Prostate gland (tissue), 2 donors: ENCODE measurements at regions of chr11 and their contacts with region 1.

Region 1: GRCh38 chr11:2196970-2197770 is 25.6 kb upstream of the TH start:
- DNase-seq: peak; percentile 77
- H3K4me3 ChIP-seq: no peak overlapping the region
- H3K27ac ChIP-seq: no peak overlapping the region
- H3K4me1 ChIP-seq: no peaks in the 10 kb centered on the region
- H3K27me3 ChIP-seq: no peaks in the 10 kb centered on the region
- CTCF ChIP-seq: peak; percentile 80 to 98 (median 92)
- POLR2A ChIP-seq: no peak

Region 2: GRCh38 chr11:2256923-2257716 is 60.0 kb after region 1 on chr11:
- intact Hi-C with region 1: no loop called
- DNase-seq: peak; percentile 85
- H3K4me3 ChIP-seq: no peak overlapping the region
- H3K27ac ChIP-seq: peak overlapping the region; percentile 84 to 93
- H3K4me1 ChIP-seq: peaks cover 18% of the 10 kb centered on the region
- H3K27me3 ChIP-seq: no peaks in the 10 kb centered on the region
- CTCF ChIP-seq: peak in 1 of 4 experiments; percentile 8
- POLR2A ChIP-seq: no peak

Region 3: DNA sequence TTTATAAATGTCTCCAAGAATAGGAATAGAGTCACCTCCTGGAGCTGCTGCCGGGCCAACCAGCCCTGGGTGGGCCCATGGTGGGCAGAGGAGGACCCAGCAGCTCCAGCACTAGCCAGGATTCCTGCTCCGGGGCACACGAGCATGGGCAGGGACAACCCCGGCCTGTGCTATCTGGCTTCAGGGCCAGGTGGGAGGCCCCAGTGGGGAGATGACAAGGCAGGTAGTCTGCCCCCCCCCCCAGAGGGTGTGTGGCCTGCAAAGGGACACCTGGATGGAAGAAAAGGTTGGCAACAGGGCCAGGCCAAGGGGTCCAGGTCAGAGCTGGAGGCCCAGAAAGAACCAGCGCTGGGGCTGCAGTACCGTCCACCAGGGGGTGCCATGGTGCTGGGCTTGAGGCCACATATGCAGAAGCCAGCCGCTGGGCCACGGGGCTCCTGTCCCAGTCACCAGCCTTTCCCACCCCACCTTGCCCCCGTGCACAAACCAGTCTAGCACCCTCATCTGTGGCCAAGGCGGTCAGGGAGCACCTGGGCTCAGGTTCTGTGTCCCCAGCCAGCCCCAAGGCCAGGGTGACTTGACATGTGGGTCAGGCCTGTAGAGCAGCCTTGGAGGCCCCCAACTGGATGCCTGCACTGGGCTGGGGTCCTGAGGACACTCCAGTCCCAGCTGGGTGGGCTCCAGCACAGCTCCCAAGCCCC is 108.1 kb after region 1 on chr11:
- intact Hi-C with region 1: loop called (anchors 5 kb)
- DNase-seq: peak; percentile 74
- H3K4me3 ChIP-seq: no peak overlapping the region
- H3K27ac ChIP-seq: peak overlapping the region in 1 of 2 donors; percentile 19
- H3K4me1 ChIP-seq: no peaks in the 10 kb centered on the region
- H3K27me3 ChIP-seq: no peaks in the 10 kb centered on the region
- CTCF ChIP-seq: peak; percentile 86 to 98 (median 92)
- POLR2A ChIP-seq: no peak

Region 4: GRCh38 chr11:2420502-2421225 is 223.5 kb after region 1 on chr11:
- intact Hi-C with region 1: loop called (anchors 1 kb)
- DNase-seq: peak; percentile 47
- H3K4me3 ChIP-seq: no peak overlapping the region
- H3K27ac ChIP-seq: no peak overlapping the region
- H3K4me1 ChIP-seq: no peaks in the 10 kb centered on the region
- H3K27me3 ChIP-seq: no peaks in the 10 kb centered on the region
- CTCF ChIP-seq: peak; percentile 80 to 97 (median 91)
- POLR2A ChIP-seq: peak; percentile 11

Region 5: GRCh38 chr11:2807025-2807681 is 610.0 kb after region 1 on chr11:
- intact Hi-C with region 1: no loop called
- DNase-seq: peak; percentile 84
- H3K4me3 ChIP-seq: peak overlapping the region in 1 of 2 donors; percentile 2
- H3K27ac ChIP-seq: peak overlapping the region; percentile 51 to 64
- H3K4me1 ChIP-seq: peaks cover 4% of the 10 kb centered on the region
- H3K27me3 ChIP-seq: no peaks in the 10 kb centered on the region
- CTCF ChIP-seq: no peak
- POLR2A ChIP-seq: peak; percentile 42

Region 6: DNA sequence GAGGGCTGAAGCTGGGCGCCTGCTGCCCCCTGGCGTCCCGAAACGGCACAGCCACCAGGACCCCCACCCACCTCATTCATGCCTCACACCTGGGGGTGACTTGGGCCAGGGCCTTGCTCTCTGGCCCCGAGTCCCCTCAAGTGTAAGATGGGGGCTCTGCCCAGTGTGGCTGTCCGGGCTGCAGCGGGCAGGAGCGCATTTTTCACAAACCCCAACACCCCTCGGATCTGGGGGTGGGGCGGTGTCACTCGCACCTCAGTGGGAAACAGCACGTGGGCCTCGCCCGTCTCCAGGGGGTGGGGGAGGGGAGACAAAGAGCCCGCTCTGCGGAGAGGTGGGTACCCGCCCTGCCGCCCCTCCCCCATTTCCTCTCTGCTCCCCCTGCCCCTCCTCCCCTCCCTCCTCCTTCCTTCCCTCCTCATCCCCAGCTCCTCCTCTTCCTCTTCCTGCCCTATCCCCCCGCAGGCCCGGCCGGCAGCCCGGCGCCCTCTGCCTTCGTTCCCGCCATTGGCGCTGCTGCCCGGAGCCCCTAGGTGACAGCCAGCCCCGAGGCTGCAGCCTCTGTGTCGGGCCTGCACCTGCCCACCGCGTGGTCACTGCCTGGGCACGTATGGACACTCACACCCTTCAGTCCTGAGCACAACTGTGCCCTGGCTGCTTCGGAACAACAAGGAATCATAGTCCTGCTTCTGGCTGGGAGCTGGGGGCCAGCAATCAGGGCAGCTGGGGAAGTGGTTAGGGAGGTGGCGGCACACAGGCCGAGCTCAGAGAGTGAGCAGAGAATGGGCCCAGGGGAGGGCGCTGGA is 695.2 kb after region 1 on chr11:
- intact Hi-C with region 1: loop called (anchors 10 kb)
- DNase-seq: no peak
- H3K4me3 ChIP-seq: peak overlapping the region; percentile 27 to 36
- H3K27ac ChIP-seq: peak overlapping the region; percentile 85 to 88
- H3K4me1 ChIP-seq: peaks cover 20% of the 10 kb centered on the region
- H3K27me3 ChIP-seq: no peaks in the 10 kb centered on the region
- CTCF ChIP-seq: peak; percentile 90 to 97 (median 94)
- POLR2A ChIP-seq: peak; percentile 16